ENCODE measurements at regions of chr6 and their contacts with region 1.

Region 1: GRCh38 chr6:121055572-121056163 is 278.6 kb downstream of the TBC1D32 start:
- DNase-seq: peak; percentile 40 to 60 (median 57)
- ATAC-seq: peak; percentile 90
- H3K4me3 ChIP-seq: no peak overlapping the region
- H3K27ac ChIP-seq: no peak overlapping the region
- H3K4me1 ChIP-seq: no peaks in the 10 kb centered on the region
- H3K27me3 ChIP-seq: no peaks in the 10 kb centered on the region
- CTCF ChIP-seq: peak; percentile 51 to 75 (median 66); a peak in 5 of 6 replicates
- EP300 ChIP-seq: no peak
- POLR2A ChIP-seq: no peak
- RAD21 ChIP-seq: peak; percentile 74 to 88

Region 2: DNA sequence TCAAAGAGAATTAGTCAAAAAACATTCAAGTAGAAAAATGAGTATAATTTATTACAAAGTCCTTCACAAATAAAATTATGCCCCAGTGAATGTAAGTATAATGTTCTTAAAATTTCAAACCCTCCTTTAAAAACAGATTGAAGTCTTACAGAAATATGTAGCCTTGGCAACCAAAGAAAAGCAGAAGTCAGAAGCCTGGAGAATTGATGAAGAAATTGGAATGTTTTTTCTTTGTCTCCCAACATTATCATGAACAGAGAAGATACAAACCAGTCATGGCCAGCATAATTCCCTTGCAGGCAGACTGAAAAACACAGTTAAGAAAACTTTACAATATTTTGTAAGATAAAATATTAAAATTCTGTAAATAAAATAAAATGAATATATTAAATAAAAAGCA is 56.7 kb after region 1 on chr6:
- CTCF ChIA-PET with region 1: no interaction called
- POLR2A ChIA-PET with region 1: no interaction called
- in situ Hi-C with region 1: no loop called
- intact Hi-C with region 1: no loop called
- DNase-seq: no peak
- ATAC-seq: no peak
- H3K4me3 ChIP-seq: no peak overlapping the region
- H3K27ac ChIP-seq: no peak overlapping the region
- H3K4me1 ChIP-seq: no peaks in the 10 kb centered on the region
- H3K27me3 ChIP-seq: no peaks in the 10 kb centered on the region
- CTCF ChIP-seq: no peak
- EP300 ChIP-seq: no peak
- POLR2A ChIP-seq: no peak
- RAD21 ChIP-seq: no peak

Region 3: GRCh38 chr6:121222656-121223055 is 167.0 kb after region 1 on chr6:
- CTCF ChIA-PET with region 1: interaction called, 6 read pairs
- POLR2A ChIA-PET with region 1: no interaction called
- in situ Hi-C with region 1: no loop called
- intact Hi-C with region 1: loop called (anchors 2 kb)
- DNase-seq: peak in 1 of 4 experiments; percentile 1
- ATAC-seq: no peak
- H3K4me3 ChIP-seq: no peak overlapping the region
- H3K27ac ChIP-seq: no peak overlapping the region
- H3K4me1 ChIP-seq: no peaks in the 10 kb centered on the region
- H3K27me3 ChIP-seq: no peaks in the 10 kb centered on the region
- CTCF ChIP-seq: no peak
- EP300 ChIP-seq: no peak
- POLR2A ChIP-seq: no peak
- RAD21 ChIP-seq: no peak; a peak in 1 of 4 replicates

Region 4: DNA sequence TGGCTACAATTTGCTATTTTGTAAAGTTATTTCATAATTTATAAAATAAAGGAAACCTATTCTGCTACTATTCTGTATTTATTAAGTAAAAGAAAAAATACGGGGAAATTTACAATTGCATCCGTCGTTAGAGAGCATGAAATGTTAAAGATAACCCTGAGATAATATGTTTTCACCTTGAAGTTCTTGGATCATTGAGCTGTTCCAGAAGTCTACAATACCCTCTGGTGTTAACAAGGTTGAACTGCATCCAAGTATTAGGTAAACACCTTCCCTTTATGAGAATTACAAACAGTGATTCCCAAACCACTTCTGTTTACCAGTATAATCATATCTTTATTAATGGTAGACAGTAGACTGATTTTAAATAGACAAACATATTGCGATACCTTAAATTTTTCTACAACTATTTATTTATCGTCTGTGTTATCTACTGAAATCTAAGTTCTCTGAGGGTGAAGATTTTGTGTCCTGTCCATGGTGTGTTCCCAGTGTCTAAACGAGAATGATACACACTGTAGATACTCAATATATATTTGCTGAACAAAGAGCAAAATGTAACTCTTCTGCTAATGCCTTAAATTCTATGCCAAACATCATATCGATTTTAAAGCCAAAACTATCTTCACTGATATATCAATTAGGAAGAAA is 250.4 kb after region 1 on chr6:
- CTCF ChIA-PET with region 1: interaction called, 18 read pairs
- POLR2A ChIA-PET with region 1: no interaction called
- in situ Hi-C with region 1: no loop called
- intact Hi-C with region 1: loop called (anchors 1 kb)
- DNase-seq: peak; percentile 16 to 52 (median 23)
- ATAC-seq: peak; percentile 86
- H3K4me3 ChIP-seq: no peak overlapping the region
- H3K27ac ChIP-seq: no peak overlapping the region
- H3K4me1 ChIP-seq: no peaks in the 10 kb centered on the region
- H3K27me3 ChIP-seq: no peaks in the 10 kb centered on the region
- CTCF ChIP-seq: peak; percentile 26 to 64 (median 33); a peak in 3 of 6 replicates
- EP300 ChIP-seq: no peak
- POLR2A ChIP-seq: no peak
- RAD21 ChIP-seq: peak; percentile 71 to 86

Region 5: DNA sequence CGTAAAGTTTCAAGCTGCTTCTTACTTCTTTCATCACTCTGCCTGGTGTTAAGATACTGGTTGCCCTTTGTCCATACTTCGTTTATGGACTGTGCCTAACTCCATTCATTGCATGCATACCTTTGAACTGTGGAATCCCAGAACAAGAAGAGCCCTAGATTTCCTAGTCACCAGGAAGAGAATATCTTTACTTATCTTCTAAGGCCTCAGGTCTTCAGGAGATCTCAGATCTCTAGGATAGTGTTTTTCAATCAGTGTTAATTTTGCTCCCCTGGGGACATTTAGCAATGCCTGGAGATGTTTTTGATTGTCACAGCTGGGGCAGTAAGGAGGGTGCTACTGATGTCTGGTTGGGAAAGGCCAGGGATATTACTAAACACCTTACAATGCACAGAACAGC is 344.3 kb after region 1 on chr6:
- CTCF ChIA-PET with region 1: interaction called, 6 read pairs
- POLR2A ChIA-PET with region 1: no interaction called
- in situ Hi-C with region 1: no loop called
- intact Hi-C with region 1: loop called (anchors 1 kb)
- DNase-seq: no peak
- ATAC-seq: no peak
- H3K4me3 ChIP-seq: no peak overlapping the region
- H3K27ac ChIP-seq: no peak overlapping the region
- H3K4me1 ChIP-seq: no peaks in the 10 kb centered on the region
- H3K27me3 ChIP-seq: no peaks in the 10 kb centered on the region
- CTCF ChIP-seq: no peak
- EP300 ChIP-seq: no peak
- POLR2A ChIP-seq: no peak
- RAD21 ChIP-seq: no peak

Region 6: DNA sequence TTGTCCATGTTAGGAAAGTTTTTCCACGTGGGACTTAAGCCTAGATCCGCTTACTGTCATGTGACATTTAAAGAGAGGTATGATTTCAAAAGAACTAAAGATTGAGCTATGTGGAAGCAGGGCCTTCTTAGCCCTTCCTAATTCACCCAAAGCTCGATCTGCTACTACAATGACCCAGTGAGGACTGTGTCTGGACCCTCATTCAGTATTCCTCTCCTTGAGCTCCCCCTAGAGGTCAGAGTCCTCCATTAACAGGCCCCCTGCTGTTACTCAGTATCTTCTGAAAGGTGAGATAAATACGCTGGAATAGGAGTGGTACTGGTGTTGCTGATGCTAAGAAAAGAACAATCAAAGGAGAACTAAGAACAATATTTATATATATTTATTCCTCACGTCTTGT is 793.8 kb after region 1 on chr6:
- CTCF ChIA-PET with region 1: no interaction called
- POLR2A ChIA-PET with region 1: no interaction called
- in situ Hi-C with region 1: no loop called
- intact Hi-C with region 1: loop called (anchors 10 kb)
- DNase-seq: peak; percentile 40 to 58 (median 48)
- ATAC-seq: peak; percentile 56; the same call in 2 of the 3 replicates
- H3K4me3 ChIP-seq: no peak overlapping the region
- H3K27ac ChIP-seq: no peak overlapping the region
- H3K4me1 ChIP-seq: no peaks in the 10 kb centered on the region
- H3K27me3 ChIP-seq: no peaks in the 10 kb centered on the region
- CTCF ChIP-seq: peak; percentile 31 to 47 (median 36); a peak in 5 of 6 replicates
- EP300 ChIP-seq: no peak
- POLR2A ChIP-seq: no peak
- RAD21 ChIP-seq: peak; percentile 22 to 26; a peak in 2 of 4 replicates

Region 7: DNA sequence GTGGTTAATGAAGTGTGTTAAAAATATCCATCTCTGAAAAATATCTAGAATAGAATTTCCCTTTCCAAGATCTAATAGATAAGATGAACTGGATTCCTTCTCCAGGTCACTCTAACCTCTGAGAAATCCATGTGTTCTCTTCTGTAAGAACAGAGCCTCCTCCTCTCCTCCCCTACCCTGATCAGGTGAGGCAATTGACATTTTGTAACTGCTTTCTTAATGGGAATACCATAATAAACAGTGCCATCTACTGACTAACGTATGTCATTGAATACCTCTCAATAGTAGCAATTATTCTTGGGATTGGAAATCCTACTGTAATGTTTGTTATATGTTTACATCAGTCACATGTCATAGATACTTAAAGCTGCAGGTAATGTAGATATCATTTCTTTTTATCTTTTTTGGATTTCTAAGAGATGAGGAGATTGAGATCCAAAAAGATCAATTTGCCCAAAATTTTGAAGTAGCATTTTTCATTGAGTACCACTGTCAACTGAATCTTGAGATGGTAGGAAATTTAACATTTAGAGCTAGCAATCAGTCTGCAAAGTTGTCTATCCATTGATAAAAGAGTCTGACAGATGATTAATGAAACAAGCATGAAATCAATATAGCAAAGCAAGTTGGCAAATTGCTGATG is 978.0 kb after region 1 on chr6:
- CTCF ChIA-PET with region 1: interaction called, 5 read pairs
- POLR2A ChIA-PET with region 1: no interaction called
- in situ Hi-C with region 1: no loop called
- intact Hi-C with region 1: loop called (anchors 5 kb)
- DNase-seq: peak; percentile 14 to 27 (median 16)
- ATAC-seq: peak; percentile 59; the same call in 2 of the 3 replicates
- H3K4me3 ChIP-seq: no peak overlapping the region
- H3K27ac ChIP-seq: no peak overlapping the region
- H3K4me1 ChIP-seq: no peaks in the 10 kb centered on the region
- H3K27me3 ChIP-seq: no peaks in the 10 kb centered on the region
- CTCF ChIP-seq: peak in 2 of 3 experiments; percentile 39 to 45; a peak in 3 of 6 replicates
- EP300 ChIP-seq: no peak
- POLR2A ChIP-seq: no peak
- RAD21 ChIP-seq: peak; percentile 55 to 68

Measured in K562 (cell line).